Panc1 (cell line): ENCODE measurements at regions of chr19 and their contacts with region 1.

Region 1: DNA sequence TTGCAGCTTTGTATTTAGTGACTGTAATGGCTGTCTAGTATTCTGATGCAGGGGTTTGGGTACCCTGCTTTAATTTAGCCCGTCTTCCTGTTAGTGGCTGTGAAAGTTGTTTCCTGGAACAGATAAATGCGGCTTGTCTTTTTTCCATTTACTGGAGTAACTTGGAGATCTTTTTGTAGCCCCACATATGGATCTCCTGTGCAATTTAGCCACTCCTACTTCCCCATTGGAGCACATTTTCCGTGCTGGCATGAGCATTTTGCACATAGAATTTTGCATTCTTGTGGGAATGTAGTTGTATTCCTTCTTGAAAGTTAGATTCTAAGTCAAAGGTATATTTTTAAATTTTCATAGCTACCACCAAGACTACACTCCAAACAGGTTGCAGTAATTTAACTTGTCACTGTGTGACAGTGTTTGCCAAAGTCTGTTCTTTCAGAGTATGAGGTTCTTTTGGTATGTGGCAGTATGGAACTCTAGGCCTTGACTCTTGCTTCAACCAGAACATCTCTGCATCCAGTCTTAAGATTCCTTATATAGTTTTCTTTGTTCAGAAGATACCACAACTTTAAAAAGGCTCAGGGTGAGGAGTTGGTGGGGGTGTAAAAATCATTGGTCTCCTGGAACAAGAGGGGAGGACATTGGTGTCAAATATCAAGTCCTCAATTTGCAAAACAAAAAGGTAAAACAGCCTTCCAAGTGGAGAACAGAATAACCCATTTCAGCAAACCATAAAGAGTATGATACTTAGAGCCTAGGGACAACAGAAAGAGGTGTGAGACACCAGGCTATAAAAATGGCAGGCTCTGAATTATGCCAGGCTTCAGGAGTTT is 21.1 kb upstream of the CCDC97 start:
- DNase-seq: no peak
- ATAC-seq: no peak
- H3K4me3 ChIP-seq: no peak overlapping the region
- H3K27ac ChIP-seq: no peak overlapping the region
- H3K4me1 ChIP-seq: no peaks in the 10 kb centered on the region
- H3K27me3 ChIP-seq: no peaks in the 10 kb centered on the region
- CTCF ChIP-seq: no peak

Region 2: GRCh38 chr19:41039806-41040205 is 249.1 kb before region 1 on chr19:
- CTCF ChIA-PET with region 1: no interaction called
- POLR2A ChIA-PET with region 1: no interaction called
- in situ Hi-C with region 1: no loop called
- intact Hi-C with region 1: no loop called
- DNase-seq: no peak
- ATAC-seq: no peak
- H3K4me3 ChIP-seq: no peak overlapping the region
- H3K27ac ChIP-seq: no peak overlapping the region
- H3K4me1 ChIP-seq: no peaks in the 10 kb centered on the region
- H3K27me3 ChIP-seq: no peaks in the 10 kb centered on the region; the same call in 1 of the 2 replicates
- CTCF ChIP-seq: no peak

Region 3: DNA sequence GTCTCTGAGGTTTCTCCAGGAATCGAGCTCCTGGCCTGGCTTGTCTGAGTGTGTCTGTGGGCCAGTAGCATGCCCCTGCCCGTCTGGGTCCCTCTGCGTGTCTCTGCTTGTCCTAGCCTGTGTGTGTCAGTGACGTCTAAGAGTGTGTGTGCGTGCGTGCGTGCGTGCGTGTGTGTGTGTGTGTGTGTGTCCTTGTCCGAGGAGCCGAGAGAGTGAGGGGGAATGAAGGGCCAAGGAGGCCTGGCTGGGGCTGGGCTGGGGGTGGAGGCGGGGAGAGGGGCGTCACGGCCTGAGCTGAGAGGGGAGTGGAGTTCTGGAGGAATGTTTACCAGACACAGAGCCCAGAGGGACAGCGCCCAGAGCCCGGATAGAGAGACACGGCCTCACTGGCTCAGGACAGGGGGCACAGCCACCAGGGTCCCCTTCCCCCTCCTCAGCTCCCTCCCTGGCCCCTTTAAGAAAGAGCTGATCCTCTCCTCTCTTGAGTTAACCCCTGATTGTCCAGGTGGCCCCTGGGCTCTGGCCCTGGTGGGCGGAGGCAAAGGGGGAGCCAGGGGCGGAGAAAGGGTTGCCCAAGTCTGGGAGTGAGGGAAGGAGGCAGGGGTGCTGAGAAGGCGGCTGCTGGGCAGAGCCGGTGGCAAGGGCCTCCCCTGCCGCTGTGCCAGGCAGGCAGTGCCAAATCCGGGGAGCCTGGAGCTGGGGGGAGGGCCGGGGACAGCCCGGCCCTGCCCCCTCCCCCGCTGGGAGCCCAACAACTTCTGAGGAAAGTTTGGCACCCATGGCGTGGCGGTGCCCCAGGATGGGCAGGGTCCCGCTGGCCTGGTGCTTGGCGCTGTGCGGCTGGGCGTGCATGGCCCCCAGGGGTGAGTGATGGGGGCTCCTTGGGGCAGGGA is 70.0 kb before region 1 on chr19 and contains the start of gene AXL:
- CTCF ChIA-PET with region 1: interaction called, 11 read pairs
- POLR2A ChIA-PET with region 1: no interaction called
- in situ Hi-C with region 1: no loop called
- intact Hi-C with region 1: no loop called
- DNase-seq: no peak
- ATAC-seq: peak; percentile 78
- H3K4me3 ChIP-seq: peak within 1 kb of the TSS; percentile 56 to 80
- H3K27ac ChIP-seq: peak within 1 kb of the TSS; percentile 84
- H3K4me1 ChIP-seq: peaks cover 28% of the 10 kb centered on the region
- H3K27me3 ChIP-seq: no peaks in the 10 kb centered on the region
- CTCF ChIP-seq: no peak
- total RNA-seq, gene AXL: 128 TPM

Region 4: DNA sequence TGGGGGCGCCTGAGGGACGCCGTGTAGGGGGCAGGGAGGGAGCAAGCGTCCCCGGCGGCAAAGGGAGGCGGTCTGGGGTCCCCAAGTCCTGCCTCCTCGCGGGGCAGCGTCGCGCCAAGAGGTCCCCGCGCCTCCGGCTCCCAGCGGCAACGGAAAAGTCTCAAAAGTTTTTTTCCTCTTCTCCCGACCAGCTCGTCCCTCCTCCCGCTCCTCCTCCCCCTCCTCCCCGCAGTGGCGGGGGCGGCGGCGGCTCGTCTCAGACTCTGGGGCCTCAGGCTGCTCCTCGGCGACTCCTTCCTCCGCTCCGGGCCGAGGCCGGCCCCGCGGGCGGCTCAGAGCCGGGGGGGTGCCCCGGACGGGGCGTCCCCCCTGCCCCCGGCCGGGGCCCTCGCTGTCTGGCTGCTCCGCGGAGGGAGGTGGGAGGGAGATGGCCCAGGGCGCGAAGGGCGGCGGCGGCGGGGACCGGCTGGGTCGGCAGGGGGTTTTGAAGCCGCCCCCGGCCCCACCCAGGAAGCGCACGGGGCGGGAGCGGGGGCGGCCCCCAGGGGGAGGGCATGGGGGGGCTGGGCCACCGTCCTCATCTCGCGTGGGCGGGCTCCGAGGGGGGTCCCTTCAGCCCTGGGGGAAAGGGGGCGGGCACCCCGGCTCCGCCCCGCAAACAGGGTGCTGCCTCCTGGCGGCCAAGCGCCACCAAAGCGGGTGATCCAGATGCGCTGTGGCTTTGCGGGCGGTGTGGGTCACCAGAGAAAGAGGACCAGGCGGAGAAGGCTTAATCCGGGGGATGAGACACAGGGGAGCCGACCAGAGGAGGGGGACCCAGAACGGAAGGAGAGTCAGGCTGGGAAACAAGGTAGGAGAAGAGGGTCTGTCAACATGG is 64.8 kb after region 1 on chr19 and contains the start of gene TGFB1:
- CTCF ChIA-PET with region 1: no interaction called
- POLR2A ChIA-PET with region 1: interaction called, 11 read pairs
- in situ Hi-C with region 1: no loop called
- intact Hi-C with region 1: no loop called
- DNase-seq: no peak
- ATAC-seq: peak; percentile 76
- H3K4me3 ChIP-seq: peak within 1 kb of the TSS; percentile 72 to 79
- H3K27ac ChIP-seq: peak within 1 kb of the TSS; percentile 75
- H3K4me1 ChIP-seq: peaks cover 5% of the 10 kb centered on the region; the same call in 1 of the 2 replicates
- H3K27me3 ChIP-seq: no peaks in the 10 kb centered on the region
- CTCF ChIP-seq: peak; percentile 90
- total RNA-seq, gene TGFB1: 42.6 TPM